Activated B cell treated with CpG ODN at 0.5 μM for 24 hours (primary cell): ENCODE measurements at regions of chr12 and their contacts with region 1.

Region 1: GRCh38 chr12:49842519-49843352 is at the start of gene BCDIN3D:
- DNase-seq: peak; percentile 88
- ATAC-seq: peak; percentile 90
- H3K4me3 Mint-ChIP-seq: peak within 1 kb of the TSS; percentile 93
- H3K27ac Mint-ChIP-seq: peak within 1 kb of the TSS; percentile 90
- H3K4me1 Mint-ChIP-seq: peaks cover 34% of the 10 kb centered on the region
- H3K27me3 Mint-ChIP-seq: no peaks in the 10 kb centered on the region
- CTCF ChIP-seq: no peak
- total RNA-seq, gene BCDIN3D: 10.4 and 12.0 TPM in 2 replicates

Region 2: GRCh38 chr12:49644620-49644994 is 198.1 kb before region 1 on chr12:
- CTCF ChIA-PET with region 1: interaction called, 6 read pairs
- POLR2A ChIA-PET with region 1: no interaction called
- intact Hi-C with region 1: loop called (anchors 2 kb)
- DNase-seq: peak; percentile 71
- ATAC-seq: peak; percentile 92
- H3K4me3 Mint-ChIP-seq: peak overlapping the region; percentile 12
- H3K27ac Mint-ChIP-seq: peak overlapping the region; percentile 81
- H3K4me1 Mint-ChIP-seq: peaks cover 24% of the 10 kb centered on the region
- H3K27me3 Mint-ChIP-seq: no peaks in the 10 kb centered on the region
- CTCF ChIP-seq: peak; percentile 93

Region 3: GRCh38 chr12:49776413-49776812 is 66.3 kb before region 1 on chr12:
- CTCF ChIA-PET with region 1: interaction called, 33 read pairs
- POLR2A ChIA-PET with region 1: interaction called, 3 read pairs
- intact Hi-C with region 1: loop called (anchors 1 kb)
- DNase-seq: no peak
- ATAC-seq: peak; percentile 85
- H3K4me3 Mint-ChIP-seq: no peak overlapping the region
- H3K27ac Mint-ChIP-seq: no peak overlapping the region
- H3K4me1 Mint-ChIP-seq: peaks cover 13% of the 10 kb centered on the region
- H3K27me3 Mint-ChIP-seq: peaks cover 17% of the 10 kb centered on the region
- CTCF ChIP-seq: no peak

Region 4: GRCh38 chr12:49818241-49818895 is 24.4 kb before region 1 on chr12:
- CTCF ChIA-PET with region 1: no interaction called
- POLR2A ChIA-PET with region 1: no interaction called
- intact Hi-C with region 1: no loop called
- DNase-seq: no peak
- ATAC-seq: no peak
- H3K4me3 Mint-ChIP-seq: no peak overlapping the region
- H3K27ac Mint-ChIP-seq: no peak overlapping the region
- H3K4me1 Mint-ChIP-seq: peaks cover 9% of the 10 kb centered on the region
- H3K27me3 Mint-ChIP-seq: no peaks in the 10 kb centered on the region
- CTCF ChIP-seq: no peak

Region 5: DNA sequence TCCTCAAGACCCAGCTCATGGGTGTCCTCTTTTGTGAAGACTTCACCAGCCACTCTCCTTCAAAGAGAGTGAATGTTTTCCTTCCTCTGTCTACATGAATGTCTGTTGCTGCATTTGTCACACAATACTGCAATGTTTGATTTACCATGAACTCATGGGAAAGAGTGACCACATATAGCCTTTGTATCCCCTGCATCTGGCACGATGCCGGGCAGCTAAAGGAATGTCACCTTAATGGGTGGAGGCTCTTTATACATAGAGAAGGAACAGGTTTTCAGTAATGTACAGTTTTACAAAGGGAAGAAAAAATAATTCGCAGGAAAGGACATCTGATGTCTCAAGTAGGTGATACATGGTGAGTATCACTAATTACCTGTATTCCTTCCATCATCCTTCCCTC is 12.3 kb after region 1 on chr12:
- CTCF ChIA-PET with region 1: no interaction called
- POLR2A ChIA-PET with region 1: no interaction called
- intact Hi-C with region 1: no loop called
- DNase-seq: no peak
- ATAC-seq: no peak
- H3K4me3 Mint-ChIP-seq: no peak overlapping the region
- H3K27ac Mint-ChIP-seq: no peak overlapping the region
- H3K4me1 Mint-ChIP-seq: no peaks in the 10 kb centered on the region
- H3K27me3 Mint-ChIP-seq: peaks cover 24% of the 10 kb centered on the region
- CTCF ChIP-seq: no peak

Region 6: DNA sequence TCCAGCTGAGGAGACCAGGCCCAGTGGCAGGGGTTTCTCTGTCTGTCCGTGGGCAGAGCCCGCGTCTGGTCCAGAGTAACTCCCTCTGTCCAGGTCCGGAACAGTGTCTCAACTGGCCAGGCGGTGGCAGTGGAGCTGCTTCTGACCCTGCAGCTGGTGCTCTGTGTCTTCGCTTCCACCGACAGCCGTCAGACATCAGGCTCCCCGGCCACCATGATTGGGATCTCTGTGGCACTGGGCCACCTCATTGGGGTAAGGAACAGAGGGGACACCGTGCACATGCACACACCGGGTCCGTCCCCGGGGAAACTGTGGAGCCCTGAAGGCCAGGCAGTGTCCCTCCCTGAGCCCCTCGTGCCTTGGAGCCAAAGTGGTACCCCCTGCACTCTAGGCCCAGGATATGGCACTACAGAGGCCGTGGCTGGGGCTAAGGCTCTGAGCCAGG is 131.5 kb after region 1 on chr12:
- CTCF ChIA-PET with region 1: no interaction called
- POLR2A ChIA-PET with region 1: no interaction called
- intact Hi-C with region 1: no loop called
- DNase-seq: no peak
- ATAC-seq: no peak
- H3K4me3 Mint-ChIP-seq: no peak overlapping the region
- H3K27ac Mint-ChIP-seq: no peak overlapping the region
- H3K4me1 Mint-ChIP-seq: no peaks in the 10 kb centered on the region
- H3K27me3 Mint-ChIP-seq: no peaks in the 10 kb centered on the region
- CTCF ChIP-seq: no peak

Region 7: GRCh38 chr12:50025187-50026059 is 182.7 kb after region 1 on chr12 and contains the start of gene RACGAP1:
- CTCF ChIA-PET with region 1: no interaction called
- POLR2A ChIA-PET with region 1: interaction called, 3 read pairs
- intact Hi-C with region 1: loop called (anchors 1 kb)
- DNase-seq: peak; percentile 83
- ATAC-seq: peak; percentile 97
- H3K4me3 Mint-ChIP-seq: peak within 1 kb of the TSS; percentile 96
- H3K27ac Mint-ChIP-seq: peak within 1 kb of the TSS; percentile 79
- H3K4me1 Mint-ChIP-seq: peaks cover 16% of the 10 kb centered on the region
- H3K27me3 Mint-ChIP-seq: no peaks in the 10 kb centered on the region
- CTCF ChIP-seq: no peak
- total RNA-seq, gene RACGAP1: 12.2 and 12.6 TPM in 2 replicates